SK-N-SH (cell line): ENCODE measurements at regions of chr14 and their contacts with region 1.

Region 1: DNA sequence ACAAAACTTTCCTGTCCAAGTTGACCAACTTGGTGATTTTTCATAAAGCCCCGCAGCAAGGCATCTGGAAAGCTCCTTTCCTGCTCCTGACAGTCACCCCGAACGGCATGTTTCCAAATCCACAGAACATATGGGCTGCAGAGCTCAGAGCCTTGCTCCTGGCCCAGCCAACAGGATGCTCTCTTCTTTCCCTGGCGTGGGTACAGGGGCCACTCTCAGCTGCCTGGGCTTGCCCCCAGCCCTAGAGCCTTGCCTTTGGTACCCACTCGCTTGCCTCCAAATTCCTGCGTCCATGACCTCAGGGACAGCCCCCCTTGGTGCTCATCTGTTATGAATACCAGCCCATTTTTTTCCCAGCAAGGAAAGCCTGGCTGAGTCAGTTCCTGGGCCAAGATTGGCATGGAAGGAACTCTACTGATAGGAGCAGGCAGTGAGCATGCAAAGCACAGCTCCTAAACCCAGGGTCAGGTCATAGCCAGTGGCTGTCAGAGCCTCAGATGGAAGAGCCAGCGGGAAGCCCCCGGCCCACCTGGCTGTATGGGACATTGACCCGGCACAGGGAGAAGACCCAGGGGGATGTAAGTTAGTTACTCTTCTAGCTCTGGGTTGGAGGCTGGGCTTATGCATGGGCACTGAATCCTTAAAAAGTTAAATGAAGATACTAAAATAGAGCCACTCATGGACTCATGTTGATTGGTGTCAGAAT is 105.3 kb upstream of the RTL1 start:
- DNase-seq: no peak
- H3K4me3 ChIP-seq: no peak overlapping the region
- H3K27ac ChIP-seq: peak overlapping the region in 1 of 2 experiments; percentile 100; a peak in 2 of 4 replicates
- H3K4me1 ChIP-seq: peaks cover 0 to 51% of the 10 kb centered on the region in 2 experiments; a peak in 2 of 4 replicates
- H3K27me3 ChIP-seq: no peaks in the 10 kb centered on the region
- CTCF ChIP-seq: no peak
- EP300 ChIP-seq: peak in 1 of 2 experiments; percentile 4; a peak in 1 of 4 replicates
- RAD21 ChIP-seq: no peak; the same call in 1 of the 2 replicates

Region 2: GRCh38 chr14:100906420-100906819 is 102.4 kb before region 1 on chr14:
- CTCF ChIA-PET with region 1: interaction called, 15 read pairs
- POLR2A ChIA-PET with region 1: interaction called, 20 read pairs
- DNase-seq: peak; percentile 74
- H3K4me3 ChIP-seq: no peak overlapping the region; a peak in 2 of 4 replicates
- H3K27ac ChIP-seq: peak overlapping the region in 1 of 2 experiments; percentile 99; a peak in 2 of 4 replicates
- H3K4me1 ChIP-seq: peaks cover 0 to 53% of the 10 kb centered on the region in 2 experiments; a peak in 1 of 4 replicates
- H3K27me3 ChIP-seq: peaks cover 6% of the 10 kb centered on the region; the same call in 1 of the 2 replicates
- CTCF ChIP-seq: peak; percentile 30
- EP300 ChIP-seq: no peak
- RAD21 ChIP-seq: peak; percentile 78

Region 3: GRCh38 chr14:101128478-101129321 is 119.9 kb after region 1 on chr14:
- CTCF ChIA-PET with region 1: interaction called, 4 read pairs
- POLR2A ChIA-PET with region 1: interaction called, 15 read pairs
- DNase-seq: peak; percentile 20
- H3K4me3 ChIP-seq: no peak overlapping the region
- H3K27ac ChIP-seq: peak overlapping the region in 1 of 2 experiments; percentile 98; a peak in 2 of 4 replicates
- H3K4me1 ChIP-seq: peaks cover 0 to 83% of the 10 kb centered on the region in 2 experiments; a peak in 2 of 4 replicates
- H3K27me3 ChIP-seq: no peaks in the 10 kb centered on the region
- CTCF ChIP-seq: no peak
- EP300 ChIP-seq: no peak
- RAD21 ChIP-seq: no peak

Region 4: GRCh38 chr14:101225450-101226152 is 216.8 kb after region 1 on chr14:
- CTCF ChIA-PET with region 1: interaction called, 5 read pairs
- POLR2A ChIA-PET with region 1: interaction called, 13 read pairs
- DNase-seq: no peak
- H3K4me3 ChIP-seq: no peak overlapping the region
- H3K27ac ChIP-seq: peak overlapping the region in 1 of 2 experiments; percentile 97; a peak in 2 of 4 replicates
- H3K4me1 ChIP-seq: peaks cover 0 to 72% of the 10 kb centered on the region in 2 experiments; a peak in 1 of 4 replicates
- H3K27me3 ChIP-seq: no peaks in the 10 kb centered on the region
- CTCF ChIP-seq: no peak
- EP300 ChIP-seq: no peak
- RAD21 ChIP-seq: no peak

Region 5: GRCh38 chr14:101235335-101236103 is 226.7 kb after region 1 on chr14:
- CTCF ChIA-PET with region 1: interaction called, 16 read pairs
- POLR2A ChIA-PET with region 1: interaction called, 4 read pairs
- DNase-seq: peak; percentile 95
- H3K4me3 ChIP-seq: no peak overlapping the region
- H3K27ac ChIP-seq: peak overlapping the region in 1 of 2 experiments; percentile 58; a peak in 1 of 4 replicates
- H3K4me1 ChIP-seq: peaks cover 0 to 37% of the 10 kb centered on the region in 2 experiments; a peak in 1 of 4 replicates
- H3K27me3 ChIP-seq: no peaks in the 10 kb centered on the region
- CTCF ChIP-seq: peak; percentile 70
- EP300 ChIP-seq: no peak
- RAD21 ChIP-seq: peak; percentile 93